Aorta (tissue), 5 donors: ENCODE measurements at regions of chr12 and their contacts with region 1.

Region 1: DNA sequence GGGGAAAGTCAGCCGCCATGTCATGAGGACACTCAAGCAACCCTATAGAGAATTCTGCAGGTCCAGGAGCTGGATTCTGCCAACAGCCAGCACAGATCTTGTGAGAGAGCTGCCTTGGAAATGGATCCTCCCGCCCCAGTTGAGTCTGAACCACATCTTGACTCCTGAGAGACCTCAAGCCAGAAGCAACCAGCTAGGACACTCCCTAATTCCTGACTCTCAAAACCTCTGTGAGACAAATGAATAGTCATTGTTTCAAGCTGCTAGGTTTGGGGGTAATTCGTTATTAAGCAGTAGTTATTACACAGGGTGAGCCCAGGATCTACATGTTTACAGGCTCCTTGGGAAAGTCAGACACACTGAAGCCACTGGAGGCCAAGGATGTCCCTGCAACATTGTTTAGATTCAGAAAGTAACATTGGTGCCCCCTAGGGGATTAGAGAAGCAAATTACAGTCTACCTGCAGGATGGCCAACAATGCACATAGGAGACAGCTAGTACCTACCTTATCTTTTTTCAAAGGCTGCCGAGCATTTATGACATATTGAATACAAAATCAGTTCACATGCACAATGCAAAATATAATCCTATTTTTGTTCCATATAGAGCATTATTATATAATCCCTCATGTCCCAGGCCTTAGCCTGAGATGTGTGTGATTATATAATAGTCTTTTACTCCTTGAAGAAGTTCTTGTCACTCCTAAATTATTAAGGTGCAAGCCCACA is 57.9 kb upstream of the FICD start:
- DNase-seq: no peak
- ATAC-seq: peak; percentile 45
- H3K4me3 ChIP-seq: no peak overlapping the region
- H3K27ac ChIP-seq: no peak overlapping the region
- H3K4me1 ChIP-seq: no peaks in the 10 kb centered on the region
- H3K27me3 ChIP-seq: no peaks in the 10 kb centered on the region

Region 2: DNA sequence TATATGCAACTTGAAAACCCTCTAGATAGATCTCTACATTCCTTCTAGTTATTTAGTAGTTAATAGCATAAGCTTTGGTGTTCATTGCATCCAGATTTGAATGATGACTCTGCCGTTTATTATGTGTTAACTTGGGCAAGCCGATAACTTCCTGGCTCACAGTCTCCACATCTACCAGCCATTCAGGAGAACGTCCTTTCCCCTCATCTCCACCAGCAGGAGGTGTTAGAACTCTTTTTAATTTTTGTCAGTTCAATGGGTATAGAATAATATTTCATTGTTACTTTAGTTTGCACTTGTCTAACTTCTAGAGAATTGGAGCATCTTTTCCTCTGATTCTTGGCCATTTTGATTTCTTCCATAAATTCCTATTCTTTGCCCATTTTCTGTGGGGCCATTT is 358.1 kb before region 1 on chr12:
- intact Hi-C with region 1: loop called (anchors 5 kb)
- DNase-seq: no peak
- ATAC-seq: no peak
- H3K4me3 ChIP-seq: no peak overlapping the region
- H3K27ac ChIP-seq: no peak overlapping the region
- H3K4me1 ChIP-seq: no peaks in the 10 kb centered on the region
- H3K27me3 ChIP-seq: peaks cover 0 to 2% of the 10 kb centered on the region in 2 donors

Region 3: GRCh38 chr12:108234158-108234557 is 223.0 kb before region 1 on chr12:
- intact Hi-C with region 1: loop called (anchors 1 to 5 kb)
- DNase-seq: peak in 1 of 2 donors; percentile 61
- ATAC-seq: peak; percentile 55
- H3K4me3 ChIP-seq: no peak overlapping the region
- H3K27ac ChIP-seq: no peak overlapping the region
- H3K4me1 ChIP-seq: no peaks in the 10 kb centered on the region
- H3K27me3 ChIP-seq: no peaks in the 10 kb centered on the region

Region 4: GRCh38 chr12:108342985-108343384 is 114.2 kb before region 1 on chr12:
- intact Hi-C with region 1: loop called in 1 of 2 experiments (anchors 5 kb)
- DNase-seq: no peak
- ATAC-seq: peak; percentile 17
- H3K4me3 ChIP-seq: no peak overlapping the region
- H3K27ac ChIP-seq: peak overlapping the region; percentile 40 to 56
- H3K4me1 ChIP-seq: no peaks in the 10 kb centered on the region
- H3K27me3 ChIP-seq: no peaks in the 10 kb centered on the region